ENCODE measurements at regions of chr1 and their contacts with region 1.

Region 1: DNA sequence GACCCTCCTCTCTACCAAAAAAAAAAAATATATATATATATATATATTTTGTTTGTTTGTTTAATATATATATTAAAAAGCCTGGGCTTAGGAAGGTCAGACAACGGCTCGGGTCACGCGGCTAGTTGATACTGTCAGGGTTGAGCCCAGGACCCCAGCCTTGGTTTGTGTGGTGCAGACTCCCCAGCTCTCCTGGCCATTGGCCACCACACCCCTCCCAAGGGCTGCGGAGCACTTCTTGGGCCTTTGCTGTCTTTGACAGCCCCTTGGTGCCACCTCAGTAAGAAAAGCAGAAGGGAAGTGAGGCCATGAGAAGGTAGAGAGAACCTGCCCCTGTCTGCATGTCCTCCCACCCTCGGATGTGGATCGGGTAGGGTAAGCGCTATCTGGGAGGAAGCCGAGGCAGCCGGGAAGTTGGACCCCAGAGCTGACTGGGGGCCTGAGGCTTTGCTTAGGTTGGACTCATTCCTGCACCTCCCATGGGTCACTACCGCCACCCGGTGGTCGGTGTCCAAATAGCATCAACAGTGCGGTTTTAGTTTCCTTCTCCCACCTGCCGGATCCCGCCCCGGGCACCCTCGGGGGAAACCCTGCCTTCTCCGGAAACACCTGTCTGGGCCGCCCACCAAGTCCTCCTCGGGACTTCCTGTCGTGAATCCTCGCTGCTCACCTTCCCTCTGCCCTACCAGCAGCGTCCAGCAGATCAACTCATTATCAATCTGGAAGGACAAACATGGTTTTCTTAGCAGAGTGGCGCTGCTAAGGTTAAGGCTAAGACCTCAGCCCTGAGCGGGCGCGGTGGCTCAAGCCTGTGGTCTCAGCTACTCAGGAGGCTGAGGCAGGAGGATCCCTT is 29.8 kb upstream of the GNPAT start:
- DNase-seq: peak; percentile 97
- H3K4me3 Mint-ChIP-seq: peak overlapping the region; percentile 91
- H3K27ac Mint-ChIP-seq: peak overlapping the region; percentile 82
- H3K4me1 Mint-ChIP-seq: peaks cover 13% of the 10 kb centered on the region
- H3K27me3 Mint-ChIP-seq: peaks cover 7% of the 10 kb centered on the region

Region 2: DNA sequence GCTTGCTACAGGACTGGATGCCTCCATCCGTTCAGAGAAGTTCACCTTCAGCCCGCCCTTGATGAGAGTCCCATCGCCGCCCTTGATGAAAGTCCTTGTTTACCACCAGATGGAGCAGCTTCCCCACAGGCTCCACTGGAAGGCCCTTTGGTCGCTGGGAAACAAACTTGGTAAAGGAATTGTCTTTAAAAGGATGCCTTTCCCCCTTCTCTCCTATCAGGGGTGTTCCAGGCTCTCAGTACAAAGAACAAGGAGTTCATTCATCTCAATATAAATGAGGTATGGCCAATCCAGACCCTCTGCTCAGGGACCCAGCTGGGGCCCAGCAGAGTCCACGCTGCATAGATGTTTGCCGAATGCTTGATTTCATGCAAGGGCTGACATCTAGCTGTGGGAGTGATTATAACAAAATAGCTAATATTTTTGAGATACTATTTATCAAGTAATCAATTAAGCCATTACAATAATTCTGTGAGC is 413.3 kb before region 1 on chr1:
- intact Hi-C with region 1: loop called (anchors 1 kb)
- DNase-seq: peak; percentile 62
- H3K4me3 Mint-ChIP-seq: no peak overlapping the region
- H3K27ac Mint-ChIP-seq: no peak overlapping the region
- H3K4me1 Mint-ChIP-seq: no peaks in the 10 kb centered on the region
- H3K27me3 Mint-ChIP-seq: peaks cover 2% of the 10 kb centered on the region

Region 3: DNA sequence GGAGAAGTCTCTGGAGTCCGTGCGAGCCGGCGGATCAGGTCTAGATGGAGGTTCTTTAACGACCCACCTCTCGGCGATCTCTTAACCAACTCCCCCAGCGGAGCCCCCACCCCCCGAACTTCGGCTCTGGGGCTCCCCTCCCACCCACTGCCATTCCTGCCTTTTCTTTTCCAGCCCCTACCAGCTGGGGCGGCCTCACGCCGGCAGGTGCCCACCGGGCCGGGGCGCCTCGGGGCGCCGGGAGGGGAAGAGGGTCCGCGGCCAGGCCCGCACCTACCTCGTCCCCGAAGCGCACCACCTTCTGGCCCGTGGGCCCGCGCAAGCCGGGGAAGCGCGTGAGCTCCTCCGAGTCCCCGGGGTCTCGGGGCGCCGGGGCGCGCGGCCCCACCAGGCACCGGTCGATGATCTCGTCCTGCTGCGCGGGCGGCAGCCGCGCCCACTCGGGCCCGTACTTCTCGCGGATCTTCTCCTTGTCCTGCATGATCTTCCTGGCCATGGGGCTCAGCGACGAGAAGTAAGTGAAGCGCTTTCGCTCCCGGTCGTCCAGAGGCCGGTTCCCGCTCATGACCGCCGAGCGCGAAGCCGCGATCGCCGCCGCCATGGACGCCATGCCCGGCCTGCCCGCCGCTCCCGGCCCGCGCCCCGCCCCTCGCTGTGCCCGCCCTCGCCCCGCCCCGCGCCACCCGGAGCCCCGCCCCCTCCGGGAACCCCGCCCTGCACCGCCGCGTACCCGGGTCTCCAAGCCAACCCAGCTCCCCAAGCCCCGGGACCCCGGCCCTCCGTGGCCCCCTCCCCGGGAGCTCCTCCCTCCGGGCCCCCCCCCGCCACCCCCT is 343.1 kb before region 1 on chr1 and contains the start of gene C1orf198:
- intact Hi-C with region 1: loop called (anchors 5 kb)
- DNase-seq: peak; percentile 91
- H3K4me3 Mint-ChIP-seq: peak within 1 kb of the TSS; percentile 89
- H3K27ac Mint-ChIP-seq: peak within 1 kb of the TSS; percentile 84
- H3K4me1 Mint-ChIP-seq: peaks cover 31% of the 10 kb centered on the region
- H3K27me3 Mint-ChIP-seq: peaks cover 35% of the 10 kb centered on the region
- total RNA-seq, gene C1orf198: 12.4 and 13.7 TPM in 2 replicates

Region 4: DNA sequence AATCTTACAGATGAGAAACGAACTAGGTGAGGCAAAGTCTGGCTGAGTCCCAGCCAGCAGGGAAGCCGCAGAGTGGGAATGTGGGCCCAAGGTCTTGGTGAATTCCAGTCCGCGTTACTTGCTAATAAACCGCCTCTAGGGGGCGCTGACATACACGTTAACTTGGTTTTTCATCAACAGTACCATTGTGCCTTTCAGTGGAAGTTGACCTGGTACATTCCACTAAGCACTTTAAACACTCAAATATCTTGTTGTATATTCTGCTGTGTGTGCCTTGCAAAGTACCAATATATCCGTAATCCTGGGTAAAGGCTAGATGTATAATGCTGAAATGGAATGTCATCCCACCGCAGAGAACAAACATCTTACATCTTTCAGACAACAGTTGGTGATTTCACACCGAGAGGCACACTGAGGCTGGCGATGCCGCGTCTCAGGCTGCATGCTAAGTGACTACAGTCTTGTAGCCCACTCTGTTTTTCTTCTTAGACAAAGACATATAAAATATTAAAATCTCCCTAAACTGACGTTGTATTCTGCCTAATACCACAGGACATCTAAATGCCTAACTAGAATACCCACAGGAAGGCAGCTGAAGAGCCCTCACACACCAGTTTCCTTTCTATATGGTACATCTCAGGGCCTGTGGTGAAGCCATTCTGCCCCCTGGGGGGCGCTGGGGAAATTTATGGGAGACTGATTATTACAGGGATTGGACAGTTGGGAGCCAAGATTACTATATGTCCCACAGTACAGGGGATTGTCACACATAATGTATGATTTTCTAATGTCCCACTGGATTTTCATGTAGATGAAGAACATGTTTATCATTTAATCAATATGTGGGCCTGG is 293.7 kb before region 1 on chr1:
- intact Hi-C with region 1: loop called (anchors 1 kb)
- DNase-seq: peak; percentile 91
- H3K4me3 Mint-ChIP-seq: no peak overlapping the region
- H3K27ac Mint-ChIP-seq: no peak overlapping the region
- H3K4me1 Mint-ChIP-seq: peaks cover 7% of the 10 kb centered on the region
- H3K27me3 Mint-ChIP-seq: no peaks in the 10 kb centered on the region

Region 5: DNA sequence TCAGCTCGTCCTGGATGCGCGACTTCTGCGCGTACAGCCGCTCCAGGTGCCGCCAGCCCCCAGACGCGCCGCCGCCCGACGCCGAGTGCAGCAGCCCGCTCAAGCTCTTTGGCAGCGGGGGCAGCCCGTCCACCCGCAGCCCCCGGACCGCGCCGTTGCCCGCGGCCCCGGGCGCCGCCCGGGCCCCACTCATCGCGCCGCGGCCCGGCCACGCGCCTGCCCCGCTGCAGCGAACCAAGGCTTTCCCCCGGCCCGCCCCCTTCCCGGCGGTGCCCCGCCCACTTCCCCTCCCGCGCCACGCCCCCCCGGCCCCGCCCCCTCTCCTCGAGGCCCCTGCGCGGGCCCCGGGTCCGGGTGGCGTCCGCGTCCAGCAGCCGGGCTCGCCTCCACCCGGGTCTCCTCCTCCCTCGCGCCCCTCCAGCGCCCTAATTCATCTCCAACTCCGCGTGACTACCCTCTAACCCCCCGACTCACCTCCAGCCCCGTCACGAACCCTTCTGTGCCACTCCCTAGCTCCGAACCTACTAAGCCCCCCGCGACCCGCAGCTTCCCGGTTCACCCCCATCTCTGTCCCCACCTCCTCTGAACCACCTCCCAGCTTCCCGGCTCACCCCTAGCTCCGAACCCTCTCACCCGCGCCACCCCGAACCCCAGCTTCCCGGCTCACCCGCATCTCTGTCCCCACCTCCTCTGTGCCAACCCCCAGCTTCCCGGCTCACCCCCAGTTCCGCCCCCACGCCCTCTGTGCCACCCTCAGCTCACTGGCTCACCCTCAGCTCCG is 171.0 kb before region 1 on chr1 and contains the start of gene FAM89A:
- intact Hi-C with region 1: loop called (anchors 10 kb)
- DNase-seq: peak; percentile 90
- H3K4me3 Mint-ChIP-seq: peak within 1 kb of the TSS; percentile 85
- H3K27ac Mint-ChIP-seq: peak within 1 kb of the TSS; percentile 61
- H3K4me1 Mint-ChIP-seq: peaks cover 28% of the 10 kb centered on the region
- H3K27me3 Mint-ChIP-seq: peaks cover 30% of the 10 kb centered on the region
- total RNA-seq, gene FAM89A: 20.2 and 20.3 TPM in 2 replicates

Region 6: DNA sequence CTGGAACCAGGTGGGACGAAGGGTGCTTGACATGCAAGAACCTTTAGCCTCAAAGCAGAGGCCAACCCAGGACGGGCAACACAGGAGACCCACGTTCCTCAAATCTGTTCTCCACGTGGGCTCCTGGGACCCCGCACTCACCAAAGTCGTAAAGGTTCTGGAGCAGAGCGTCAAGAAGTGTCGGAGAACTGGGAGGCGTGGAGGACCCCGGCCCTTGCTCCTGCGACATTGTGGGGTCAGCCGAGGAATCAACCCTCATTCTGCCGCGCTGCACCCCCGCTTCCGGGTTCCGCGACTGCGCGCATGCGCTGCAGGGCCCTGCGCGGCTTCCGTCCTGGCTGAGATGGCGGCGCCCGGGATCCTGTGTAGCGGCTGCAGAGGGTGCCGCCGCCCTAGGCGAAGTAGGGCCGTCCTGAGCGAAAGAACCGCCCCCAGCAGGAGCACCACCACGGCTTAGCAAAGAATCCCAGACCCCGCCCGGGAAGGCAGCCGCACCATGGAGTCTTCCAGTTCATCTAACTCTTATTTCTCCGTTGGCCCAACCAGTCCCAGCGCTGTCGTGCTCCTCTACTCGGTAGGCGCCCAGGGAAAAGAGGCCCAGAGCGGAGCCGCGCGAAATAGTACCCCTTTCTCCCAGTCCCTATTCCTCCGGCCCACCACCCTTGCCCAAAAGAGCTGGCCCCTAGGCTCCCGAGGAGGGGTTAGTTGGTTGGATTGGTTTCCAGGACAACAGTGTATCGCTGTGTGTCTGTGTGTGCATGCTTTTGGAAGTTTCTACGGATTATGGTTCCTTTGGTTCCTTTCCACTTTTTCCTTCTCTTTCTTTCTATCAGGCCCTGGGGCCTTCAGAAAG is 29.9 kb after region 1 on chr1 and contains the start of gene GNPAT:
- intact Hi-C with region 1: loop called (anchors 1 kb)
- DNase-seq: peak; percentile 98
- H3K4me3 Mint-ChIP-seq: peak within 1 kb of the TSS; percentile 94
- H3K27ac Mint-ChIP-seq: peak within 1 kb of the TSS; percentile 97
- H3K4me1 Mint-ChIP-seq: peaks cover 52% of the 10 kb centered on the region
- H3K27me3 Mint-ChIP-seq: no peaks in the 10 kb centered on the region
- total RNA-seq, gene GNPAT: 45.6 and 47.5 TPM in 2 replicates